Lower lobe of right lung (tissue), 2 donors: ENCODE measurements at regions of chr12 and their contacts with region 1.

Region 1: GRCh38 chr12:92136965-92137721 is 8.5 kb downstream of the BTG1 start:
- DNase-seq: no peak
- ATAC-seq: peak in 1 of 2 donors; percentile 47
- H3K4me3 ChIP-seq: peak overlapping the region; percentile 87
- H3K27ac ChIP-seq: peak overlapping the region; percentile 32
- H3K4me1 ChIP-seq: peaks cover 73% of the 10 kb centered on the region
- H3K27me3 ChIP-seq: no peaks in the 10 kb centered on the region
- CTCF ChIP-seq: no peak

Region 2: DNA sequence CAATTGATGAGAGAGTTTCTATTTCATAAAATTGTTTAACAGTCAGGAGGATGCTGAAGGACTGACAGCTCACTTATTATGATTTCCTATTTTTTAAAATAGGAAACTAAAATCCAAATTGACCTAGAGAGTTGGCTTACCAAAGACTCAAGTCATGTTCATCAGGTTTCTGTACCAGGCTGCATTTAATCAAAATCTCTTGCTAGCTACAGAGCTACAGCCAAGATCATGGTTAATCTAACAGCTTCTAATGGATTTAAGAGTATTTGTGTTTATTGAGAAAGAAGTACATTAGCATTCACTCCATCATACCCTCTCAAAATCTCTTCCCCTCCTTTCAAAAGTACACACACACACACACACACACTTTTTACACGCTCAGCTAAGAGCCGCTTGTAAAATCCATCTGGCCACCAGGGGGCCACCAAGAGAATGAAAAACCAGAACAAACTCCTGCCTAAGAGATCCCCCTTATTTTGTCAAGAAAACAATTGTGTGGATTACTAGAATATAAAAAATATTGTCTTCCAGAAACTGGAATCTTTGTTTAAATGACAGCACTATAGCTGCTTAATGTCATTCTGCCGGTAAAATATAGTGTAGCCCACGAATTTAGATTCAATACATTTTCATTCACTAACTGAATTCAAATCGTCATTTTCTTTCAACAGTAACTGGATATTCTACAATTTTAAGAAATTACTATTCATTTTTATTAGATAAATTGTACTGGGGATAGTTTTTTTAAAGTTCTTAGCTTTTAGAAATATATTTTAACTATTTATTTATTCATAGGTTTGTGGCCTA is 325.5 kb before region 1 on chr12:
- intact Hi-C with region 1: loop called (anchors 10 kb)
- DNase-seq: peak; percentile 71
- ATAC-seq: peak in 1 of 2 donors; percentile 81
- H3K4me3 ChIP-seq: no peak overlapping the region
- H3K27ac ChIP-seq: no peak overlapping the region
- H3K4me1 ChIP-seq: no peaks in the 10 kb centered on the region
- H3K27me3 ChIP-seq: no peaks in the 10 kb centered on the region
- CTCF ChIP-seq: peak; percentile 81

Region 3: DNA sequence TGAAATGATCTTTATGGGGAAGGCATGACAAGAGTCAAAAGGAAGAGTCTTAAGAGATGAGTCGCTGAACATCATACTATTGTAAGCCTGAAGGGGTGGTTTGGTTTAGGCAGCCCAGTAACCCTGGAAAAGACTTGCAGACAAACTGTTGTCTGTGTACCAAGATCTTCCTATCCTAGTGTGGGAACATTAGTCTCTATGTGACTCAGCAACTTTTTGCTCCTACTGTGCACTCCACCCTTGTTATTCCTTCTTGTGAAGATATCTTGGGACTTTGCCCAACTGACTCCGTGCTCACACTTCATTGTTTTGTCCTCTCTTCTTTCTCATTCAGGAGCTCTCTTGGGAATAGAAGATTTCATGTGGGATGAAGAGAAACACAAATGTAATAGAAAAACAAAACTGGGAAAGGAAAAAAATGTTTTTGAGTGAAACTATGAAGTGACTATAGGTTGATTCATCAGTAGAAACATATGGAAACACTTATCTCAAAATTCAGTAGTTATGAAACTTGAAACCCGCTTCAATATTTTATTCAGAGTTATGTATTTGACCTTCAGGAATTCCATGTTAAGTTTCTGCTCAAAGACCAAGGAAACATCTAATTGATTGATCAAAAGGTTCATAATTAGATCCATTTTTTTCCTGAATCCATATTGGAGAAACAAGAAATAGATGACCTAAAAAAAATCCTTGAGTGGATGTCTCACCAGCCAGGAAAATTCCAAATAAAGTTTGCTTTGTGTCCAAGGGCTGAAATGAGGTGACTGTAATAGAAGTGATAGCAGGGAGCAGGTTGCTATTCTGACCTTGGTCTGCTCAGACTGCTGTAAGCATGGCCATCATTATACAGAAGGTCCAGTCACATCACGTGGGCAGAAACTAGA is 58.7 kb before region 1 on chr12:
- intact Hi-C with region 1: loop called (anchors 10 kb)
- DNase-seq: no peak
- ATAC-seq: peak in 1 of 2 donors; percentile 22
- H3K4me3 ChIP-seq: no peak overlapping the region
- H3K27ac ChIP-seq: no peak overlapping the region
- H3K4me1 ChIP-seq: peaks cover 32% of the 10 kb centered on the region
- H3K27me3 ChIP-seq: no peaks in the 10 kb centered on the region
- CTCF ChIP-seq: no peak